Dorsolateral prefrontal cortex (tissue), 120 donors: ENCODE measurements at regions of chr5 and their contacts with region 1.

Region 1: DNA sequence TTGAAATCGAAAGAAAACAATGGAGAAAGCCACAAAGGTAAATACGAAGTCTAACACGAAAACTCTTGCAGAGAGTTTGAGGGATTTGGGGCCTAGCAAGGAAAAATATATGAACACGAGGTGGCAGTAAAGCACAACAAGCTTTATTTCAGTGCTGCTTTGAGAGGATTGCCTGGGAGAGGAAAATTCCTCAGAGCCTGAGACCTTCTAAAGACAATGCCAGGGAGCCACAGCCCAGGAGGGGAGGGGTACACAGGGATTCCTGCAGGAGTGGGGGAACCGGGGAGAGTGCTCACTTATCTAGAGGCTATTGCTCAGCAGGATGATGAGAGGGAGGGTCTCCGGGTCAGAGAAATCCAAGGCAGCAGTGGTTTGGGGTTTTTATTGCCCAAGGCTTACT is 134.9 kb upstream of the ADCY2 start:
- DNase-seq: no peak
- H3K4me3 ChIP-seq: no peak overlapping the region
- H3K27ac ChIP-seq: no peak overlapping the region
- H3K27me3 ChIP-seq: no peaks in the 10 kb centered on the region
- CTCF ChIP-seq: peak in 53 of 56 donors; percentile 24 to 75 (median 50)

Region 2: DNA sequence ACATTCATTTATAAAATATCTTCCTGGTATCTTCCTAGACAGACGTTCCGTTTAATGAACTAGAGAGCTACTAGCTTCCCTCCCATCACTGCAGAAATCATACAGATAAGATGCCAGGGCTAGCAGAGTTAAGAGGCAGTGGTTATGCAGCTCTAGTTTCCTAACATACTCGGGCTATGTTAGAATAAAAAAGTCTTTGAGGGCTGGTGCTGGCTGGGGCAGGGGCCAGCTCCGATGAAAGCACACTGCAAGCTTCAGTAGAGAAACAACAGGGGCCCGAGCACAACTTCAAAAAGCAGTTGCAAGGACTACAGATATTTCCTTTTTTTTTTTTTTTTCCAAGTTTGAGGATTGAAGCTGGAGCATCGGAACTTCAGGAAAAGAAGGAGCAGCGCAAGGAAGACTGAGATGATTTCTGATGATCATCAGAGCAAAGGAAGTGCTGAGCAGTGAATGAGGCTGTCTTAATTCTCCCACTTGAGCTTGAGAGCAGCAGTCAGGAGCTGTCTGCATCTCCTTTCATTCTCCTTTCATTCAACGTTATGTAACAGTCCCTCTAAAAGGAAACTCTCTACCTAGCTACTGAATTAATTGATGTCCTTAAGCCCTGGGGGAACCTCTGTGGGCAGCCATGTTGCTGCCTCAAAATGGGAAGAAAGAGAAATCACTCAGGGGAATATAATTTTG is 87.3 kb after region 1 on chr5:
- intact Hi-C with region 1: no loop called
- DNase-seq: peak in 3 of 10 donors; percentile 19 to 41 (median 31)
- H3K4me3 ChIP-seq: peak overlapping the region in 21 of 59 donors; percentile 0 to 41 (median 18)
- H3K27ac ChIP-seq: peak overlapping the region in 52 of 59 donors; percentile 9 to 86 (median 62)
- H3K27me3 ChIP-seq: no peaks in the 10 kb centered on the region
- CTCF ChIP-seq: no peak

Region 3: GRCh38 chr5:7745882-7746610 is 485.0 kb after region 1 on chr5:
- intact Hi-C with region 1: loop called in 1 of 2 experiments (anchors 5 kb)
- DNase-seq: peak in 9 of 10 donors; percentile 51 to 89 (median 69)
- H3K4me3 ChIP-seq: no peak overlapping the region
- H3K27ac ChIP-seq: peak overlapping the region in 26 of 59 donors; percentile 6 to 78 (median 39)
- H3K27me3 ChIP-seq: no peaks in the 10 kb centered on the region
- CTCF ChIP-seq: peak; percentile 77 to 97 (median 86)

Region 4: GRCh38 chr5:7856855-7857254 is 595.8 kb after region 1 on chr5:
- intact Hi-C with region 1: loop called in 1 of 2 experiments (anchors 10 kb)
- DNase-seq: peak in 8 of 10 donors; percentile 19 to 71 (median 51)
- H3K4me3 ChIP-seq: no peak overlapping the region
- H3K27ac ChIP-seq: peak overlapping the region in 2 of 59 donors; percentile 18 to 21
- H3K27me3 ChIP-seq: no peaks in the 10 kb centered on the region
- CTCF ChIP-seq: peak; percentile 42 to 92 (median 83)